ENCODE measurements at regions of chr15 and their contacts with region 1.

Region 1: GRCh38 chr15:88246666-88247446 is 9.7 kb downstream of the NTRK3 start:
- DNase-seq: peak; percentile 52
- H3K4me3 ChIP-seq: no peak overlapping the region
- H3K27ac ChIP-seq: no peak overlapping the region
- H3K4me1 ChIP-seq: no peaks in the 10 kb centered on the region
- H3K27me3 ChIP-seq: no peaks in the 10 kb centered on the region
- CTCF ChIP-seq: peak; percentile 83 to 90

Region 2: DNA sequence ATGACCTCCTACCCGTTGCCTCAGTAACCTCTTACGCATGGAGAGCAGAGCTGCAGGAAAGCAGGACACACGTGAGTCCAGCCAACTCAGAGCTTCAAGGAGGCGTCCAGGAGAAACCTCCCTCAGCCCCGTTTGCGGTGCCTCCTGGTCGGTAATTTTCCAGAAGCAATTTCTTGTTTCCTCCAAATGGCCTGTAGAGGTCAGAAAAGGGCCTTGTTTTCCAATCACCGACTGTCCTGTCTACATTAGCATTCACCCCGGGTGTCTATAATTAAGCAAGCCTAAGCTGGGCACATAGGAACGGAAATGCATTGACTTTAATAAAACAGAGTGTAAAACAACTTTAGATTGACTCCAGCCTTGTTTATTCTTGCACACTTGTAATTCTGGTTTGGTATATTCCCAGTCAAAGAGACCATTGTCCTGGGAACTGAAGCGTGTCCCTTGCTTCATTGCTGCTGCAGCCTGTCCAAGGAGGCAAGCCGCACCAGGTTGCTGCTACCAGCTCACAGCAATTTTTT is 1331.0 kb before region 1 on chr15:
- CTCF ChIA-PET with region 1: no interaction called
- dilution Hi-C with region 1: no loop called
- in situ Hi-C with region 1: no loop called
- intact Hi-C with region 1: loop called (anchors 1 kb)
- DNase-seq: peak; percentile 65
- H3K4me3 ChIP-seq: no peak overlapping the region
- H3K27ac ChIP-seq: no peak overlapping the region
- H3K4me1 ChIP-seq: peaks cover 9% of the 10 kb centered on the region
- H3K27me3 ChIP-seq: no peaks in the 10 kb centered on the region
- CTCF ChIP-seq: peak; percentile 43 to 67

Region 3: DNA sequence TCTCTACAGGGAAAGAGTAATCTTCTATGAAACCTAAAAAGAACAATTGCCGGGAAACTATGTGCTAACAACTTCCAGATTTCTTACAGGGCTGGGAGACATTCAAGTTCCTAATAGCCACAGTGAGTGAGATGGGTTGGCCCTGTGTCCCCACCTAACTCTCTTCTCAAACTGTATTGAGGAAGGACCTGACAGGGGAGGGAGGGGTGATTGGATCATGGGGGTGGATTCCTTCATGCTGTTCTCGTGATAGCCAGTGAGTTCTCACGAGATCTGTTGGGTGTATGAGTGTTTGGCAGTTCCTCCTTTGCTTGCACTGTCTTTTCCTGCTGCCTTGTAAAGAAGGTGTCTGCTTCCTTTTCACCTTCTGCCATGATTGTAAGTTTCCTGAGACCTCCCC is 1208.5 kb before region 1 on chr15:
- CTCF ChIA-PET with region 1: no interaction called
- dilution Hi-C with region 1: no loop called
- in situ Hi-C with region 1: no loop called
- intact Hi-C with region 1: loop called (anchors 1 kb)
- DNase-seq: no peak
- H3K4me3 ChIP-seq: no peak overlapping the region
- H3K27ac ChIP-seq: no peak overlapping the region
- H3K4me1 ChIP-seq: peaks cover 6% of the 10 kb centered on the region
- H3K27me3 ChIP-seq: no peaks in the 10 kb centered on the region
- CTCF ChIP-seq: no peak

Region 4: GRCh38 chr15:87672309-87673288 is 574.3 kb before region 1 on chr15:
- CTCF ChIA-PET with region 1: no interaction called
- dilution Hi-C with region 1: no loop called
- in situ Hi-C with region 1: no loop called
- intact Hi-C with region 1: loop called (anchors 1 kb)
- DNase-seq: peak; percentile 29
- H3K4me3 ChIP-seq: no peak overlapping the region
- H3K27ac ChIP-seq: no peak overlapping the region
- H3K4me1 ChIP-seq: peaks cover 5% of the 10 kb centered on the region
- H3K27me3 ChIP-seq: no peaks in the 10 kb centered on the region
- CTCF ChIP-seq: peak; percentile 74 to 88

Region 5: GRCh38 chr15:88139936-88140335 is 106.9 kb before region 1 on chr15:
- CTCF ChIA-PET with region 1: no interaction called
- dilution Hi-C with region 1: no loop called
- in situ Hi-C with region 1: no loop called
- intact Hi-C with region 1: no loop called
- DNase-seq: no peak
- H3K4me3 ChIP-seq: no peak overlapping the region
- H3K27ac ChIP-seq: no peak overlapping the region
- H3K4me1 ChIP-seq: no peaks in the 10 kb centered on the region
- H3K27me3 ChIP-seq: no peaks in the 10 kb centered on the region
- CTCF ChIP-seq: no peak

Region 6: DNA sequence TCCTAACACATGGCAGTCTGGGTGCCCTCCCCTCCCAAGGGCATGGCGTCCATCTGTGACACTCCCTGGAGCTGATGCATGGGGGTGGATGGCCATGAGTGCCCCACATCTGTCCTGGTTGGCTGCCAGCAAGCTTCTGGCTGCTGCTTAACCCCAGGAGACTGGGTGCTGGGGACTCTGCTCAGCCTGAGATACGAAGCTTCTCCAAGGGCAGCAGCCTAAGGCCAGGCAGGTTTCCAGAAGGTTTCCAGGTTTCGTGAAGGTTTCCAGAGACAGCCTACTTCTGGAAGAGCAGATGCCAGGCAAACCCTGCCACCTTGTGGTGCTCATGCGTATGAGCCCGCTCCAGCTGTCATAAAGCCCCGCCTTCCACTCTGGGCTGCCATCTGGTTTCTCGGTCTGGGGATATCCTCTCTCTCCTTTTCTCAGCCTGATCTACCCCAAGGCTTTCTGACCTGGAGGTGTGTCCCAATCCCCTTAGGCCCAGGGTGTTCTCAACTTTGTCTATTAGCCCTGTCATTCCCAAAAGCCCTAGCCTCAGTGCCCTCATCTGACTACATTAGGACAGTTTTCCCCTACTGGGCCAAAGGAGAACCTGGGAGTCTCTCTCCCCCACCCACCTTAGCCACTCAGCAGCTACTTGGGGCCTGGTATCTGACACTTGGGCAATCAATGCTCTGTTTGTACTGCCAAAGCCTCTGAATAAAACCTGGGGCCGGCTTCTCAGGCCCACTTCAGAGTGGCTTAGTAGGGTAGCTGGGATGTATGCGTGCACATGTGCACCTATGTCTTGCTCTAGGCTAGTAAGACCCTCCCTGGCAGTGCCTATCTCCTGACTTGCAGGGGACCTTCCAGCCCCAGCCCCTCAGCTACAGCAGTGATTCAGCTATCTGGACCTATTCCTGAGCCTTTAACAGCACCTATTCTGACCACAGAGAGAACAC is 208.3 kb after region 1 on chr15:
- CTCF ChIA-PET with region 1: no interaction called
- dilution Hi-C with region 1: loop called (anchors 5 kb)
- in situ Hi-C with region 1: no loop called
- intact Hi-C with region 1: loop called (anchors 1 kb)
- DNase-seq: peak; percentile 59
- H3K4me3 ChIP-seq: no peak overlapping the region
- H3K27ac ChIP-seq: no peak overlapping the region
- H3K4me1 ChIP-seq: no peaks in the 10 kb centered on the region
- H3K27me3 ChIP-seq: no peaks in the 10 kb centered on the region
- CTCF ChIP-seq: peak; percentile 89 to 90

Measured in mammary epithelial cell (primary cell).